Head of caudate nucleus (tissue), 42 donors: ENCODE measurements at regions of chr17 and their contacts with region 1.

Region 1: DNA sequence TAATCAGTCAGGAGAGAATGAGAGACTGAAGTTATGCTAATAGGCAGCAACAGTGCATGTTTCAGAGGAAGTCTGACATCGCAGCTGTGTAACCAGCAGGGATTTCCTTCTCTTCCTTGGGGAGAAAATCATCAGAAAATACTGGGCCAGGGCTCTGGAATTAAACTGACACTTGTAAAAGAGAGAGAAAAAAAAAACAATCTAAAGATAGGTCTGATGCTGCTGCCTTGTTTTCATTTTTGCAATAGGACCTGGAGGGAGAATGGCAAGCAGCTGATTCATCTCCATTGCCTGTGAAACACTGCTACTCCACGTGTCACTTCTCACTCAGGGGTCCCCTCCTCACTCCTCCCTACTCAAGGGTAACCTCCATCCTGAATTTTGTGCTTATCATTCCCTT is 17.7 kb upstream of the CORO6 start:
- DNase-seq: no peak

Region 2: GRCh38 chr17:29777663-29778062 is 137.2 kb after region 1 on chr17:
- intact Hi-C with region 1: loop called (anchors 5 kb)
- DNase-seq: no peak